Psoas muscle (tissue), 8 donors: ENCODE measurements at regions of chr3 and their contacts with region 1.

Region 1: DNA sequence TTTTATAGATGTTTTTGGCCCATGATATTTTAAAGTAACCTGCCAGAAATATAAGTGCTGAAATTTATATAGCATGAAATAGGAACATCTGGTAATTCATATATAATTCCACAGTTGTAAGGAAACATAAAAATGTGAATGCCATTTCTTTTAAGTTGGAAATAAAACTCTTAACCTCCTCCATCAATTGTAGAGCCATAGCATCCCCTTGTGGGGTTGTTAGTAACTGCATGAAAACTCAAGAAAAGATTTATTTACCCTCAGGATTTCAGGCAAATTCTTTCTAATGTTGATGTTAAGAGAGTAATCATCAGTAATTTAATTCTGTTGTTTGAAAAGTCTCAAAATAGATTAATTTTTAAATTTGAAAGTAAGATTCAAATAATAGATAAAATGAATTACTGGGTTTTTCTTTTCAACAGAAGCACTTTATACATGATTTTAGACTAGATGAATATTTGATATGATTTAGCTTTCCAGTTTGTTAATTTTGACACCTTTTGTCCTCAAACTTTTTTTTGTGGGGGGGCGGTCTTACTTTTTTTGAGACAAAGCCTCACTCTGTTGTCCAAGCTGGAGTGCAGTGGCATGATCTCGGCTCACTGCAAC is 74.7 kb downstream of the RASA2 start:
- DNase-seq: no peak
- ATAC-seq: peak in 1 of 4 donors; percentile 64
- H3K4me3 ChIP-seq: no peak overlapping the region
- H3K27ac ChIP-seq: no peak overlapping the region
- H3K4me1 ChIP-seq: no peaks in the 10 kb centered on the region
- H3K27me3 ChIP-seq: no peaks in the 10 kb centered on the region
- CTCF ChIP-seq: peak; percentile 92

Region 2: GRCh38 chr3:141303481-141304223 is 257.9 kb before region 1 on chr3:
- intact Hi-C with region 1: loop called (anchors 5 to 10 kb)
- DNase-seq: no peak
- ATAC-seq: peak; percentile 71 to 90 (median 76)
- H3K4me3 ChIP-seq: no peak overlapping the region
- H3K27ac ChIP-seq: no peak overlapping the region
- H3K4me1 ChIP-seq: no peaks in the 10 kb centered on the region
- H3K27me3 ChIP-seq: no peaks in the 10 kb centered on the region
- CTCF ChIP-seq: peak; percentile 81

Region 3: GRCh38 chr3:141360888-141361598 is 200.5 kb before region 1 on chr3:
- intact Hi-C with region 1: loop called in 1 of 2 experiments (anchors 5 kb)
- DNase-seq: no peak
- ATAC-seq: peak; percentile 73 to 93 (median 82)
- H3K4me3 ChIP-seq: peak overlapping the region; percentile 44
- H3K27ac ChIP-seq: peak overlapping the region; percentile 1
- H3K4me1 ChIP-seq: peaks cover 7% of the 10 kb centered on the region
- H3K27me3 ChIP-seq: no peaks in the 10 kb centered on the region
- CTCF ChIP-seq: peak; percentile 75

Region 4: DNA sequence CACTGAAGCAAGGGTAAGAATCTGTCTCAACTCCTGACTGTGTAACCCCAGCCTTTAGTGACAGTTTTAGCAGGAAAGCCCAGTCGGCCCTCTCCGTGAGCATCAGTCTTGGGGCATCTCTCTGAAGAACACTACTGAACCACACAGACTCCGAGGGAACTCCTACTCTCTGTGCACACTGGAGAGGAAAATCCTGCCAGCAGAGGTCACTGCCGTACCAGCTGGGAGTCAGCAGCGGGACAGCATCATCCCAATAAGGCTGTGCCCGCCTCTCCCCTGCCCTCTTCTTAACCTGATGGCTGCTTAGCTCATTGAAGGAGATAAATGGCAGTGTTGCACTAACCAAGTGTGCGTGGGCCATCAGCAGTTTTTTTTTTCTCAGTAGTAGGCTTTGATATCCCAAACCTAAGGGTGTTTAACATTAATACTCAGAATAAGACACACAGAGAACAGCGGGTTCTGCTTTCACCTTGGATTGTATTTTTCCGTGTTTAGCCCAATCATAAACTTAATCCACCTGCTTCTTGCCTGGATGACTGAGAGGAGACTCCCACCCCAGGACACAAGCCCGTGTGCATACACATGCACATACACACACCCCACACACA is 101.3 kb before region 1 on chr3:
- intact Hi-C with region 1: loop called (anchors 2 kb)
- DNase-seq: peak; percentile 86 to 91
- ATAC-seq: peak; percentile 91 to 97 (median 95)
- H3K4me3 ChIP-seq: no peak overlapping the region
- H3K27ac ChIP-seq: no peak overlapping the region
- H3K4me1 ChIP-seq: peaks cover 8% of the 10 kb centered on the region
- H3K27me3 ChIP-seq: no peaks in the 10 kb centered on the region
- CTCF ChIP-seq: peak; percentile 86